Activated naive CD8-positive, alpha-beta T cell treated with anti-CD3 and anti-CD28 coated beads, Interleukin-2, amount 10 ng/mL, durations not matched to agents 7 days and 5 days (primary cell): ENCODE measurements at regions of chr17 and their contacts with region 1.

Region 1: GRCh38 chr17:75261336-75262111 is at the starts of genes GGA3 and MRPS7:
- DNase-seq: peak; percentile 98
- ATAC-seq: peak; percentile 90
- H3K4me3 Mint-ChIP-seq: peak within 1 kb of the TSS; percentile 99
- H3K27ac Mint-ChIP-seq: peak within 1 kb of the TSS; percentile 99
- H3K4me1 Mint-ChIP-seq: peaks cover 30% of the 10 kb centered on the region
- H3K27me3 Mint-ChIP-seq: no peaks in the 10 kb centered on the region
- total RNA-seq, gene GGA3: 92.9 to 95.2 TPM
- total RNA-seq, gene MRPS7: 34.0 to 36.1 TPM

Region 2: GRCh38 chr17:75205037-75205792 is 56.3 kb before region 1 on chr17 and contains the start of gene NUP85:
- POLR2A ChIA-PET with region 1: interaction called, 12 read pairs
- DNase-seq: peak; percentile 95
- ATAC-seq: peak; percentile 87
- H3K4me3 Mint-ChIP-seq: peak within 1 kb of the TSS; percentile 92
- H3K27ac Mint-ChIP-seq: peak within 1 kb of the TSS; percentile 98
- H3K4me1 Mint-ChIP-seq: peaks cover 18% of the 10 kb centered on the region
- H3K27me3 Mint-ChIP-seq: no peaks in the 10 kb centered on the region
- total RNA-seq, gene NUP85: 154 to 167 TPM

Region 3: GRCh38 chr17:75250009-75250471 is 11.5 kb before region 1 on chr17:
- POLR2A ChIA-PET with region 1: interaction called, 51 read pairs
- DNase-seq: peak; percentile 58
- ATAC-seq: peak; percentile 95
- H3K4me3 Mint-ChIP-seq: peak overlapping the region; percentile 78
- H3K27ac Mint-ChIP-seq: peak overlapping the region; percentile 92
- H3K4me1 Mint-ChIP-seq: peaks cover 23% of the 10 kb centered on the region
- H3K27me3 Mint-ChIP-seq: no peaks in the 10 kb centered on the region